ENCODE measurements at regions of chr7 and their contacts with region 1.

Region 1: DNA sequence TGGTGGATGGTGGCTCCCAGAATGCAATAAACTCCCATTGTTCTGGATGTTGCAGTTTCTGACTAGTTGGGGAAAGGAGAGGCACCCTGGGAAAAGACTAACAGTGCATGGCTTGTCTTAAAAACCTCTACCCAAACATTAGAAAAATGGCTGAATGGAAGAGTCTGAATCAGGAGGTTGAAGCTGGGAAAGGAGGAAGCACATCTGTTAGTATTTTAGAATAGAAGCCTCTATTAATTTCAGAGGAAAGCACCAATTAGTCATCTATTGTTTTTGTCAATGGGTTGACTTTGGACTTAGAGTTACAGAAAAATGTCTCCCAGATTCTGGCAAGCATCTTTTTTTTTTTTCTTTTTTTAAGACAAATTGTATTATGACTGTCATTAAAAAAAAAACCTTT is 56.1 kb upstream of the ELMO1 start:
- DNase-seq: peak; percentile 79
- H3K4me3 ChIP-seq: no peak overlapping the region
- H3K27ac ChIP-seq: no peak overlapping the region
- H3K4me1 ChIP-seq: peaks cover 7% of the 10 kb centered on the region
- H3K27me3 ChIP-seq: peaks cover 9 to 11% of the 10 kb centered on the region in 2 experiments
- CTCF ChIP-seq: no peak
- POLR2A ChIP-seq: no peak

Region 2: DNA sequence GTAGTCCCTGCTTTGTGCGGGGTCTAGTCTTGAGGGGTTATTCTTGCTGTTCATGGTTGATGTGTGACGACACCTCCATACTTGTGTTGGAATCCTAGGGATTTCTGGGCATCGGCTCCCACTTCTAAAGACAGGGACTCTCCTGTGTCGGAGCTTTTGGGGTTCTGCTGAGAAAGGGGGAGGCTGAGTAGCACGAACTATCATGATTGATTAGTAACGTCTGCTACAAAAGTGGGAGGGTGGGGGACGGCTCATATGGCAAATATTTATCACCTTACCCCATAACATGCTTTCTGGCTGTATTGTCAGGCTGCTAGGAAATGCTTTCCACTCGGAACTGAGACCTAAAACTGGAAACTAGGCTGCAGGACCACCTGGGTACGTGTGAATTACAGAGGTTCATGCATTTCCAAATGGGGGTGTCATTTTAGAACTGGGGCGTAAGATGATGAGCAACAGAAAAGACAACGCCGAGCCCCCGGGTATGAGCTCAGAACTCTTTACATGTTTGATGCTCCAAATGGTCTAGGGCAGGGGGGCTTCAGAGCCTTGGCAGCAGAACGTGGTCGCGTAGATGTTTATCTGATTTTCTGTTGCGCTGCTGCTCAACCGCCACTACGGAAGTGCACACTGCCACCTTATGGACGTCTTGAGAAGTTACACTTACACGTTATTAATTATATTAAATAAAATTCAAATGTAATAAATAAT is 328.5 kb after region 1 on chr7:
- CTCF ChIA-PET with region 1: no interaction called
- POLR2A ChIA-PET with region 1: no interaction called
- dilution Hi-C with region 1: no loop called
- intact Hi-C with region 1: loop called (anchors 10 kb)
- DNase-seq: peak; percentile 40
- H3K4me3 ChIP-seq: peak overlapping the region in 1 of 3 experiments; percentile 8
- H3K27ac ChIP-seq: no peak overlapping the region
- H3K4me1 ChIP-seq: no peaks in the 10 kb centered on the region
- H3K27me3 ChIP-seq: peaks cover 0 to 2% of the 10 kb centered on the region in 2 experiments
- CTCF ChIP-seq: peak; percentile 48 to 52
- POLR2A ChIP-seq: no peak

Measured in endothelial cell of umbilical vein (primary cell).